Vagina (tissue), 2 donors: ENCODE measurements at regions of chr20 and their contacts with region 1.

Region 1: DNA sequence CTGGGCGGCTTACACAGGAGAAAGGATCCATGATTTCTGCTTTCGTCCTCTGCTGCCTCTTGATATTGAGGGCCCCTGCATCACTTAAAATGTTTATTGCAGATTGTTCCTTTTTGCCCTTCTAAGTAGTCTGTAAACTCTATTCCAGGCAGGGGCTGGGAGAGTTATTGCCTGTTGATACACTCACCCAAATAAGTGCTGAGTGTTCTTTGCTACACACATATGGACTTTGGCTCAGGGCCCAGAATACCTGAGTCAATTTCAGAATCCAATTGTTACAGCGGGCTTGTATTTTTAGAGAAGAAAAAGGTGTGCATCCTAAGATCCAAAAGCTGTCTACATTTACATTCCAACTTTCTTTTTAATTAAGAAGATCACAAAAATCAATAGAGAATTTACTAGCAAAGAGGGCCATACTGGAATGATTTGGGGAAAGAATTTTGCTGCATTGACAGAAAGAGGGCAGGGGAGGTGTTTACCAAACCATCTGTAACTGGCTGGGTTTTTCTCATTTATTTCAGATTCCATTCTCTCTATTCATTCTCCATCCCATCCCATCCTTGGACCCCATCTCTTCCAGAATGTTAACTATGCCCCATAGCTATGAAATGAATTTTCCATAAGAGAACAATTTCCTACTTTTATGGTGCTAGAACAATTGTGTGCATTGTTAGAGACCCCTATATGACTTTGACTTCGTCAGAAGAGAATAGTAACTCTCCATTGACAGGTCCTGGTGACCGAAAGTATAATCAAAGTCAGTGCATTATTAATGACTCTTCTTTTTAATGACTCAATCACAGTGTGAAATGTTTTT is 959.9 kb upstream of the FLRT3 start:
- DNase-seq: no peak
- H3K4me3 ChIP-seq: no peak overlapping the region
- H3K27ac ChIP-seq: no peak overlapping the region
- H3K4me1 ChIP-seq: no peaks in the 10 kb centered on the region
- H3K27me3 ChIP-seq: no peaks in the 10 kb centered on the region
- CTCF ChIP-seq: no peak
- POLR2A ChIP-seq: no peak

Region 2: GRCh38 chr20:15278041-15278440 is 19.2 kb before region 1 on chr20:
- intact Hi-C with region 1: loop called (anchors 2 kb)
- DNase-seq: no peak
- H3K4me3 ChIP-seq: no peak overlapping the region
- H3K27ac ChIP-seq: no peak overlapping the region
- H3K4me1 ChIP-seq: no peaks in the 10 kb centered on the region
- H3K27me3 ChIP-seq: no peaks in the 10 kb centered on the region
- CTCF ChIP-seq: no peak
- POLR2A ChIP-seq: no peak

Region 3: DNA sequence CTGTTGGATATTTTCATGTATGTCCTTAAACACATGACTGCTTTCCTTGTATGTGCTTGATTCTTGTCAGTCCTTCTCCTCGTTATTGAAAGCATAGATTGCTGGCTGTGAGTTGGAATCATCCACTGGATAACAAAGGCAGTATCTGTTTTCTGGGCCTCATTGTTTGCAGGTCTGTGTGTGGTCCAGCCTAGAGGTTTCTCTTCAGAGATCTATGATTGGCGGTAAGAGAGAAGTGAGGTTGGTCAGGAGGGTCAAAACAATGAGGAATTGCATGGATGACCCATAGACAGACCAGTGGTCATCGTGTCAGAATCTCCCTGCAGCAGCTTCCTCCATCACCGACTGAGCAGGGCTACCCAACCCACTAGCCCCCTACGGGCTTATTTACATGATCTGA is 361.0 kb after region 1 on chr20:
- intact Hi-C with region 1: no loop called
- DNase-seq: no peak
- H3K4me3 ChIP-seq: no peak overlapping the region
- H3K27ac ChIP-seq: no peak overlapping the region
- H3K4me1 ChIP-seq: peaks cover 9% of the 10 kb centered on the region
- H3K27me3 ChIP-seq: no peaks in the 10 kb centered on the region
- CTCF ChIP-seq: no peak
- POLR2A ChIP-seq: no peak